Spleen (tissue), 13 donors: ENCODE measurements at regions of chr6 and their contacts with region 1.

Region 1: GRCh38 chr6:10800829-10801535 is 37.4 kb downstream of the MAK start:
- DNase-seq: peak; percentile 89
- H3K4me3 ChIP-seq: no peak overlapping the region
- H3K27ac ChIP-seq: no peak overlapping the region
- H3K4me1 ChIP-seq: no peaks in the 10 kb centered on the region
- H3K27me3 ChIP-seq: no peaks in the 10 kb centered on the region
- CTCF ChIP-seq: peak; percentile 75 to 97 (median 93)
- POLR2A ChIP-seq: no peak

Region 2: GRCh38 chr6:10478187-10479040 is 322.6 kb before region 1 on chr6:
- intact Hi-C with region 1: loop called (anchors 5 kb)
- DNase-seq: no peak
- H3K4me3 ChIP-seq: no peak overlapping the region
- H3K27ac ChIP-seq: no peak overlapping the region
- H3K4me1 ChIP-seq: no peaks in the 10 kb centered on the region
- H3K27me3 ChIP-seq: peaks cover 0 to 18% (median 0%) of the 10 kb centered on the region in 7 donors
- CTCF ChIP-seq: peak; percentile 29 to 75 (median 67)
- POLR2A ChIP-seq: no peak

Region 3: GRCh38 chr6:10505529-10505928 is 295.5 kb before region 1 on chr6:
- intact Hi-C with region 1: loop called (anchors 10 kb)
- DNase-seq: no peak
- H3K4me3 ChIP-seq: no peak overlapping the region
- H3K27ac ChIP-seq: no peak overlapping the region
- H3K4me1 ChIP-seq: peaks cover 0 to 8% (median 2%) of the 10 kb centered on the region in 6 donors
- H3K27me3 ChIP-seq: peaks cover 0 to 16% (median 0%) of the 10 kb centered on the region in 7 donors
- CTCF ChIP-seq: no peak
- POLR2A ChIP-seq: no peak